Ascending aorta (tissue), 2 donors: ENCODE measurements at regions of chr15 and their contacts with region 1.

Region 1: GRCh38 chr15:25568751-25569150 is 129.9 kb upstream of the UBE3A start:
- DNase-seq: peak; percentile 25 to 83
- H3K4me3 ChIP-seq: no peak overlapping the region
- H3K27ac ChIP-seq: peak overlapping the region; percentile 75 to 77
- H3K4me1 ChIP-seq: peaks cover 4 to 61% of the 10 kb centered on the region in 2 donors
- H3K27me3 ChIP-seq: no peaks in the 10 kb centered on the region
- CTCF ChIP-seq: no peak

Region 2: GRCh38 chr15:25587616-25588340 is 19.0 kb after region 1 on chr15:
- intact Hi-C with region 1: no loop called
- DNase-seq: no peak
- H3K4me3 ChIP-seq: no peak overlapping the region
- H3K27ac ChIP-seq: no peak overlapping the region
- H3K4me1 ChIP-seq: no peaks in the 10 kb centered on the region
- H3K27me3 ChIP-seq: no peaks in the 10 kb centered on the region
- CTCF ChIP-seq: no peak

Region 3: DNA sequence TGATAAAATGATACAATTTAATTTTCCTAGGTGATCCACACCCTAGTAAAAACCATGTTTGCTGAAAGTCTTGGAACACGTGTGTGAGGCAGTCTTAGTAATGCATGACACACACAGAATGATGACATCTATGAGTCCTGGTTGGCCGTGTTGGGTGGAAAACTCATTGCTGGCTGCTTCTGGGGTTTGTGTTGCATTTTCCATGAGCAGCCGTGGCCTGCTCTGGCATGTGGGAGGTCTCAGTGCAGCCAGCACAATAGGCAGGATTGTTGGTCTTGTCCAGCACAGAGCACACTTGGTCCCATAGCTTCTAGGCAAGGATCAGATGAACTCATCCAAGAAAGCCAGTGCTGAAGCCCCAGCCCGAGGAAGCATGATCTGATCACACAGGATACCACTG is 42.9 kb after region 1 on chr15:
- intact Hi-C with region 1: loop called (anchors 5 kb)
- DNase-seq: peak; percentile 32 to 80
- H3K4me3 ChIP-seq: no peak overlapping the region
- H3K27ac ChIP-seq: peak overlapping the region in 1 of 2 donors; percentile 29
- H3K4me1 ChIP-seq: peaks cover 0 to 9% of the 10 kb centered on the region in 2 donors
- H3K27me3 ChIP-seq: no peaks in the 10 kb centered on the region
- CTCF ChIP-seq: no peak

Region 4: GRCh38 chr15:25684521-25685431 is 116.0 kb after region 1 on chr15:
- intact Hi-C with region 1: loop called (anchors 5 kb)
- DNase-seq: peak in 1 of 2 donors; percentile 88
- H3K4me3 ChIP-seq: no peak overlapping the region
- H3K27ac ChIP-seq: peak overlapping the region; percentile 81 to 88
- H3K4me1 ChIP-seq: peaks cover 0 to 31% of the 10 kb centered on the region in 2 donors
- H3K27me3 ChIP-seq: no peaks in the 10 kb centered on the region
- CTCF ChIP-seq: no peak